Caco-2 (cell line): ENCODE measurements at regions of chr1 and their contacts with region 1.

Region 1: GRCh38 chr1:193406901-193407300 is 220.5 kb upstream of the B3GALT2 start:
- DNase-seq: peak in 1 of 2 experiments; percentile 13
- H3K4me3 ChIP-seq: no peak overlapping the region
- H3K4me3 Mint-ChIP-seq: no peak overlapping the region
- H3K27ac Mint-ChIP-seq: no peak overlapping the region
- H3K4me1 ChIP-seq: peaks cover 7% of the 10 kb centered on the region
- H3K4me1 Mint-ChIP-seq: peaks cover 10% of the 10 kb centered on the region
- H3K27me3 ChIP-seq: no peaks in the 10 kb centered on the region
- H3K27me3 Mint-ChIP-seq: no peaks in the 10 kb centered on the region
- CTCF ChIP-seq: peak; percentile 58 to 68

Region 2: DNA sequence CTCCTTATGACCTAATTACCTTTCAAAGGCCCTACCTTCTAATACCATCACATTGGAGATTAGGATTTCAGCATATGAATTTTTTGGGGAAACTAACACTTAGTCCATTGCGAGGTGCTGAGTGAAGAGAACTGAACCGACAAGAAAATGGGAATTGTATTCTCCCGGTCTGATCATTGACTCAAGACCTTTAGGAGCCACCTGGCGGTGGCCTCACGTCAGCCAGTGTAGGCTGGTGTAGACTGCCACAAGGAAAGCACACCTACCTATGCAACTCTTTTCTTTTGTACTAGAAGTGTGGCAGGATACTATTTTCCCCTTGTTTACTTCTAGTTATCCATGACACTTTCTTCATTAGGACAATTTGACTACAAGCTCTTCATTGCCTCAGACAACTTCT is 113.0 kb after region 1 on chr1:
- CTCF ChIA-PET with region 1: no interaction called
- POLR2A ChIA-PET with region 1: no interaction called
- intact Hi-C with region 1: loop called (anchors 2 kb)
- DNase-seq: peak in 1 of 2 experiments; percentile 33
- H3K4me3 ChIP-seq: no peak overlapping the region
- H3K4me3 Mint-ChIP-seq: no peak overlapping the region
- H3K27ac Mint-ChIP-seq: no peak overlapping the region
- H3K4me1 ChIP-seq: no peaks in the 10 kb centered on the region
- H3K4me1 Mint-ChIP-seq: peaks cover 4% of the 10 kb centered on the region
- H3K27me3 ChIP-seq: no peaks in the 10 kb centered on the region
- H3K27me3 Mint-ChIP-seq: no peaks in the 10 kb centered on the region
- CTCF ChIP-seq: peak; percentile 22 to 36

Region 3: GRCh38 chr1:193754732-193755427 is 348.0 kb after region 1 on chr1:
- CTCF ChIA-PET with region 1: no interaction called
- POLR2A ChIA-PET with region 1: no interaction called
- intact Hi-C with region 1: loop called (anchors 5 kb)
- DNase-seq: no peak
- H3K4me3 ChIP-seq: no peak overlapping the region
- H3K4me3 Mint-ChIP-seq: no peak overlapping the region
- H3K27ac Mint-ChIP-seq: no peak overlapping the region
- H3K4me1 ChIP-seq: no peaks in the 10 kb centered on the region
- H3K4me1 Mint-ChIP-seq: no peaks in the 10 kb centered on the region
- H3K27me3 ChIP-seq: no peaks in the 10 kb centered on the region
- H3K27me3 Mint-ChIP-seq: no peaks in the 10 kb centered on the region
- CTCF ChIP-seq: peak; percentile 16 to 19